Activated B cell treated with CpG ODN at 0.5 μM for 24 hours (primary cell): ENCODE measurements at regions of chr1 and their contacts with region 1.

Region 1: GRCh38 chr1:19390901-19391595 is 78.9 kb downstream of the SLC66A1 start:
- DNase-seq: no peak
- ATAC-seq: peak; percentile 82
- H3K4me3 Mint-ChIP-seq: peak overlapping the region; percentile 83
- H3K27ac Mint-ChIP-seq: peak overlapping the region; percentile 95
- H3K4me1 Mint-ChIP-seq: peaks cover 80% of the 10 kb centered on the region
- H3K27me3 Mint-ChIP-seq: no peaks in the 10 kb centered on the region
- CTCF ChIP-seq: no peak

Region 2: GRCh38 chr1:18955504-18956368 is 435.3 kb before region 1 on chr1:
- CTCF ChIA-PET with region 1: no interaction called
- POLR2A ChIA-PET with region 1: no interaction called
- intact Hi-C with region 1: no loop called
- DNase-seq: peak; percentile 58
- ATAC-seq: peak; percentile 1
- H3K4me3 Mint-ChIP-seq: peak overlapping the region; percentile 85
- H3K27ac Mint-ChIP-seq: peak overlapping the region; percentile 72
- H3K4me1 Mint-ChIP-seq: peaks cover 57% of the 10 kb centered on the region
- H3K27me3 Mint-ChIP-seq: peaks cover 11% of the 10 kb centered on the region
- CTCF ChIP-seq: no peak

Region 3: GRCh38 chr1:19300211-19300610 is 90.8 kb before region 1 on chr1:
- CTCF ChIA-PET with region 1: no interaction called
- POLR2A ChIA-PET with region 1: no interaction called
- intact Hi-C with region 1: no loop called
- DNase-seq: no peak
- ATAC-seq: no peak
- H3K4me3 Mint-ChIP-seq: no peak overlapping the region
- H3K27ac Mint-ChIP-seq: no peak overlapping the region
- H3K4me1 Mint-ChIP-seq: no peaks in the 10 kb centered on the region
- H3K27me3 Mint-ChIP-seq: no peaks in the 10 kb centered on the region
- CTCF ChIP-seq: no peak

Region 4: GRCh38 chr1:19311959-19312781 is 78.9 kb before region 1 on chr1 and contains the starts of genes AKR7A2 and SLC66A1:
- CTCF ChIA-PET with region 1: no interaction called
- POLR2A ChIA-PET with region 1: interaction called, 3 read pairs
- intact Hi-C with region 1: loop called (anchors 2 kb)
- DNase-seq: peak; percentile 96
- ATAC-seq: peak; percentile 91
- H3K4me3 Mint-ChIP-seq: peak within 1 kb of the TSS; percentile 90
- H3K27ac Mint-ChIP-seq: peak within 1 kb of the TSS; percentile 61
- H3K4me1 Mint-ChIP-seq: peaks cover 58% of the 10 kb centered on the region
- H3K27me3 Mint-ChIP-seq: no peaks in the 10 kb centered on the region
- CTCF ChIP-seq: no peak
- total RNA-seq, gene AKR7A2: 29.9 and 30.3 TPM in 2 replicates
- total RNA-seq, gene SLC66A1: 9.1 and 11.9 TPM in 2 replicates

Region 5: GRCh38 chr1:19468397-19468956 is 77.4 kb after region 1 on chr1:
- CTCF ChIA-PET with region 1: interaction called, 3 read pairs
- POLR2A ChIA-PET with region 1: interaction called, 5 read pairs
- intact Hi-C with region 1: loop called (anchors 2 kb)
- DNase-seq: no peak
- ATAC-seq: peak; percentile 74
- H3K4me3 Mint-ChIP-seq: peak overlapping the region; percentile 76
- H3K27ac Mint-ChIP-seq: peak overlapping the region; percentile 95
- H3K4me1 Mint-ChIP-seq: peaks cover 98% of the 10 kb centered on the region
- H3K27me3 Mint-ChIP-seq: no peaks in the 10 kb centered on the region
- CTCF ChIP-seq: no peak

Region 6: DNA sequence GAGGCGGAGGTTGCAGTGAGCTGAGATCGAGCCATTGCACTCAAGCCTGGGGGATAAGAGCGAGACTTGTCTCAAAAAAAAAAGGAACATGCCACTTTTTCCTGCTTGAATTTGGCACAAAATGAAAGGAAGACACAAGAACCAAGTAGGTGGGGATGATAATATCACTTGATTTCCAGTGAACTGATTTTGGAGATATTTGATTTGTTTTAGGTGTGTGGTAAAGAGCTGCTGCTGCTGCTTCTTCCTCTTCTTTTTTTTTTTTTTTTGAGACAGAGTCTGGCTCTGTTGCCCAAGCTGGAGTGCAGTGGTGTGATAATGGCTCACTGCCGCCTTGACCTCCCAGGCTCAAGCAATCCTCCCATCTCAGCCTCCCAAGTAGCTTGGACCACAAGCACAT is 124.2 kb after region 1 on chr1:
- CTCF ChIA-PET with region 1: no interaction called
- POLR2A ChIA-PET with region 1: interaction called, 10 read pairs
- intact Hi-C with region 1: no loop called
- DNase-seq: no peak
- ATAC-seq: no peak
- H3K4me3 Mint-ChIP-seq: no peak overlapping the region
- H3K27ac Mint-ChIP-seq: no peak overlapping the region
- H3K4me1 Mint-ChIP-seq: peaks cover 49% of the 10 kb centered on the region
- H3K27me3 Mint-ChIP-seq: no peaks in the 10 kb centered on the region
- CTCF ChIP-seq: no peak

Region 7: DNA sequence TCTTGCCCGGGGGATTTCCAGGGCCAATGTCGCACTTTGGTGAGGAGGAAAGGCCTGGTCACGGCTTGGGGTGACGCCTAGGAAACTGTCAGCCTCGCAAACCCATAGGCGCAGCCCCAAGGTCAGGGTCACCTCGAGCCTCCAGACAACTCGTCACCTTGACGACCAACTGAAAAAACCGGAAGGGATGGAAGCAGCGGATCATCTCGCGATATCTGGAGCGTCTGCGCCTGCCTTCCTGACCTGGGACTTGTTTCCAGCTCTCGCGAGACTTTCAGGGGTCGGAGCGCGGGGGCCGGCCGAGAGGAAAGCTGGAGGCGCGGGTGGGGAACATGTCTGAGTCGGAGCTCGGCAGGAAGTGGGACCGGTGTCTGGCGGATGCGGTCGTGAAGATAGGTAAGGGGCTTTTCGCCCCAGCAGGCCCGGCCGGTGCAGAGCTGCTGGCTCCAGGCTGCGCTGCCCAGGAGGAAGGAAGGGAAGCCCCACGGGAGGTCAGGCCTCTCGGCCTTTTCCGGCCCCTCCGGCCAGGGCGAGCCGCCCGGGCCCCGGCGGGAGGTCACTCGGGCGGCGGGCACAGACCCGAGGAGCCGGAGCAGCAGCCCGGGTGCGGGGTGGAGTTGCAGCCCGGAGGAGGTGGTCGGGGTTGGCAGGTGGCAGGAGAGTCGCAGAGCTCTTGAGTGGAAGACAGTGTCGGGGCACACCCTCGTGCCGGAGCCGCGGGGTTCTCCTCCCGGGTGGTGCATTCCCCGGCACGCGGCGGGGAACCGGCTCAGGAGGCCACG is 205.9 kb after region 1 on chr1:
- CTCF ChIA-PET with region 1: interaction called, 4 read pairs
- POLR2A ChIA-PET with region 1: interaction called, 6 read pairs
- intact Hi-C with region 1: loop called (anchors 1 kb)
- DNase-seq: peak; percentile 86
- ATAC-seq: peak; percentile 91
- H3K4me3 Mint-ChIP-seq: peak overlapping the region; percentile 100
- H3K27ac Mint-ChIP-seq: peak overlapping the region; percentile 99
- H3K4me1 Mint-ChIP-seq: peaks cover 48% of the 10 kb centered on the region
- H3K27me3 Mint-ChIP-seq: no peaks in the 10 kb centered on the region
- CTCF ChIP-seq: no peak

Region 8: DNA sequence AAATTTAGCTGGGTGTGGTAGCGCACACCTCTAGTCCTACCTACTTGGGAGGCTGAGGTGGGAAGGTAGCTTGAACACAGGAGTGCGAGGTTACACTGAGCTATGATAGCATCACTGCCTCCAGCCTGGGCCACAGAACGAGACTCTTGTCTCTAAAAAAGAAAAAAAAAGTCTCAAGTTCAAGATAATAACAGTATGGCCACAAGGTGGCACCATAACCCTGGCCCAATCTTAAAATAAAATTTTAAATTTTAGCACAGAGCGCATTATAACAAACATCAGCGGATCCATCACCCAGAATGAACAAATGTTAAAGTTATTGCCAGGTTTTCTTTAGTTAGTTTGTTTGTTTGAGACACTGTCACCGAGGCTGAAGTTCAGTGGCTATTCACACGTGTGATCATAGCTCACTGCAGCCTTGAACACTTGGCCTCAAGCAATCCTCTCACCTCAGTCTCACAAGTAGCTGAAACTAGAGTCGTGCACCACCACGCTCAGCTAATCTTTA is 270.7 kb after region 1 on chr1:
- CTCF ChIA-PET with region 1: interaction called, 5 read pairs
- POLR2A ChIA-PET with region 1: no interaction called
- intact Hi-C with region 1: loop called (anchors 2 kb)
- DNase-seq: no peak
- ATAC-seq: no peak
- H3K4me3 Mint-ChIP-seq: no peak overlapping the region
- H3K27ac Mint-ChIP-seq: no peak overlapping the region
- H3K4me1 Mint-ChIP-seq: peaks cover 25% of the 10 kb centered on the region
- H3K27me3 Mint-ChIP-seq: peaks cover 37% of the 10 kb centered on the region
- CTCF ChIP-seq: peak; percentile 97